B cell (primary cell): ENCODE measurements at regions of chr6 and their contacts with region 1.

Region 1: DNA sequence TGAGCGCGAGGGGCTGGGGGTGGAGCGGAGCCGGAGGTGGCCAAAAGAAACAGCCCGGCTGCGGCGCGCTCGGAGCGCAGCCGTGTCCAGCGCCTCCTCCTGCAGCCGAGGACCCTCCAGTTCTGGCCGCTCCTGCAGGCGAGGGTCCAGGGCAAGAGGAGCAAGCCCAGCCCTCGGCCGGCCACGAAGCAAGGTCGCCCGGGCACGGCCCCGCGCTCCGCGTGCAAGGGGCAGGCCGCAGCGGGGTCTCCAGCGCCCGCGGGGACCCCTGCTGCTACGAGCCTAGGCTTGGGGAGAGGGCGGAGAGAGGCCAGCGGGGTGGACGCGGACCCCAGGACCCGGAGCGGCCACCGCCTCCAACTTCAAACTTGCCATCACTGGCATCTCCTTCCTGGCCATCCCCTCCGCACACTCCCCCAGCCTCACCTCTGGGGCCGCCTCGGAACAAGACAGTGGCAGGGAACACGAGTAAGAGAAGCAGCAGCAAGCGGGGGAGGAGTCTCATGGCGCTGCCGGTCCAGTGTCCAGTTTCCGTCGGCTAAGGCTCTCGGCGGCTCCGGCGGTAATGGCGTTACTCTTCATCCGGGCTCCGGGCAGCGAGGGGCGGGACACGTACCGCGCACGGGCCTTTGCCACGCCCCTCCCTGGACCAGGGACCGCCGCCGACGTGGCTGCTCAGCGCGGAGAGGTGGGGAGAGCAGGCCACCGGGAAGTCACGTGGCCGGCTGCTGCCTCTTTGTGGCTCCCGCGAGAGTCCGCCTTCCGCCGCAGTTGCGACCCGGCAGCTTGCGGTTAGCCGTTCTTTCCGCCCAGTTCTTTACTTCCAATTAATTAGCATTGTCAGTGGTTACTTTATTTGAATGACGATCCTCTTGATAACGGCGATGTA is at the start of gene SSR1:
- DNase-seq: peak; percentile 96
- ATAC-seq: peak; percentile 99
- H3K4me3 ChIP-seq: peak within 1 kb of the TSS; percentile 58 to 92 (median 90)
- H3K4me3 Mint-ChIP-seq: peak within 1 kb of the TSS; percentile 96
- H3K27ac ChIP-seq: peak within 1 kb of the TSS; percentile 56 to 84
- H3K27ac Mint-ChIP-seq: peak within 1 kb of the TSS; percentile 94
- H3K4me1 ChIP-seq: peaks cover 12 to 20% of the 10 kb centered on the region in 2 donors
- H3K4me1 Mint-ChIP-seq: peaks cover 38% of the 10 kb centered on the region
- H3K27me3 ChIP-seq: no peaks in the 10 kb centered on the region
- H3K27me3 Mint-ChIP-seq: no peaks in the 10 kb centered on the region
- CTCF ChIP-seq: no peak
- total RNA-seq, gene SSR1: 81.6 and 85.3 TPM in 2 replicates

Region 2: GRCh38 chr6:7282097-7282906 is 30.6 kb before region 1 on chr6:
- CTCF ChIA-PET with region 1: interaction called, 7 read pairs
- POLR2A ChIA-PET with region 1: interaction called, 5 read pairs
- intact Hi-C with region 1: loop called (anchors 1 kb)
- DNase-seq: no peak
- ATAC-seq: no peak
- H3K4me3 ChIP-seq: no peak overlapping the region
- H3K4me3 Mint-ChIP-seq: no peak overlapping the region
- H3K27ac ChIP-seq: peak overlapping the region in 1 of 2 donors; percentile 38
- H3K27ac Mint-ChIP-seq: peak overlapping the region; percentile 43
- H3K4me1 ChIP-seq: peaks cover 24 to 27% of the 10 kb centered on the region in 2 donors
- H3K4me1 Mint-ChIP-seq: peaks cover 25% of the 10 kb centered on the region
- H3K27me3 ChIP-seq: no peaks in the 10 kb centered on the region
- H3K27me3 Mint-ChIP-seq: no peaks in the 10 kb centered on the region
- CTCF ChIP-seq: no peak

Region 3: DNA sequence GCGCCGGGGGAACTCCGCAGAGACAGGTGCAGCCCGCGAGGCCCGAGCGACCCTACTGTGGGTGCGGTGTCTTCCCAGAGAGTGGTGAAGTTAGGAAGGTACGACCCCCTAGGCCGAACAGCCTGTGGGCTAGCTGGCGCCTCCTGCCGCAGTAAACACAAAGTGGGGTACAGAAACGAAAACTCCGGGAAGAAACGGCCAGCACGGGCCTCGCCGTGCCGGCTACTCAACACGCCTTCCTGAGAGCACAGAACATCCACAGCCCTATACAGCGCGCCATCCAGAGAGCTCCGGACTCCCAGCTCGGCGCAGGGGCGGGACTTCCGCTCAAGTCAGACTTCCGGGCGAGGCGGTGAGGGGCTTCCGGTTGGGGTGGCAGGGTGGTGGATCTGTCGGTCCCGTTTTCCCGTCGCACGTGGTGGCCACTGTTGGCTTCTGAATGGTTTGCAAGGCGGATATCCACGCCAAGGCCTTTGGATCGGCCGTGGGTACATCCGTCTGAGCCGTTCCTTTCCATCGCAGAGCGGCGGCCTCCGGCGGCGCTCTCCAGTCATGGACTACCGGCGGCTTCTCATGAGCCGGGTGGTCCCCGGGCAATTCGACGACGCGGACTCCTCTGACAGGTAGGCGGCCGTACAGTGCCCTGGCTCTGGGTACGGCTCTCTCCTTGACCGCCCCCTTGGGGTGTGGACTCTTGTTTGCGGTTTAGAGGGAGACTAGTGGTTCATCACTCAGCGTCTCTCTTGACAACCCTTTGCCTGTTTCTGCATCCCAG is 76.8 kb after region 1 on chr6 and contains the starts of genes CAGE1 and RIOK1:
- CTCF ChIA-PET with region 1: interaction called, 3 read pairs
- POLR2A ChIA-PET with region 1: interaction called, 14 read pairs
- intact Hi-C with region 1: loop called (anchors 1 kb)
- DNase-seq: peak; percentile 98
- ATAC-seq: peak; percentile 89
- H3K4me3 ChIP-seq: peak within 1 kb of the TSS; percentile 83 to 96 (median 85)
- H3K4me3 Mint-ChIP-seq: peak within 1 kb of the TSS; percentile 96
- H3K27ac ChIP-seq: peak within 1 kb of the TSS; percentile 96 to 100
- H3K27ac Mint-ChIP-seq: peak within 1 kb of the TSS; percentile 99
- H3K4me1 ChIP-seq: peaks cover 18 to 26% of the 10 kb centered on the region in 2 donors
- H3K4me1 Mint-ChIP-seq: peaks cover 34% of the 10 kb centered on the region
- H3K27me3 ChIP-seq: no peaks in the 10 kb centered on the region
- H3K27me3 Mint-ChIP-seq: no peaks in the 10 kb centered on the region
- CTCF ChIP-seq: no peak
- total RNA-seq, gene CAGE1: 0.32 and 0.34 TPM in 2 replicates
- total RNA-seq, gene RIOK1: 25.9 and 32.1 TPM in 2 replicates

Region 4: DNA sequence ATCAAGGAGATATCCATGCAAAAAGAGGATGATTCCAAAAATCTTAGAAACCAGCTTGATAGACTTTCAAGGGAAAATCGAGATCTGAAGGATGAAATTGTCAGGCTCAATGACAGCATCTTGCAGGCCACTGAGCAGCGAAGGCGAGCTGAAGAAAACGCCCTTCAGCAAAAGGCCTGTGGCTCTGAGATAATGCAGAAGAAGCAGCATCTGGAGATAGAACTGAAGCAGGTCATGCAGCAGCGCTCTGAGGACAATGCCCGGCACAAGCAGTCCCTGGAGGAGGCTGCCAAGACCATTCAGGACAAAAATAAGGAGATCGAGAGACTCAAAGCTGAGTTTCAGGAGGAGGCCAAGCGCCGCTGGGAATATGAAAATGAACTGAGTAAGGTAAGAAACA is 267.0 kb after region 1 on chr6:
- CTCF ChIA-PET with region 1: no interaction called
- POLR2A ChIA-PET with region 1: no interaction called
- intact Hi-C with region 1: no loop called
- DNase-seq: no peak
- ATAC-seq: no peak
- H3K4me3 ChIP-seq: no peak overlapping the region
- H3K4me3 Mint-ChIP-seq: no peak overlapping the region
- H3K27ac ChIP-seq: no peak overlapping the region
- H3K27ac Mint-ChIP-seq: no peak overlapping the region
- H3K4me1 ChIP-seq: no peaks in the 10 kb centered on the region
- H3K4me1 Mint-ChIP-seq: no peaks in the 10 kb centered on the region
- H3K27me3 ChIP-seq: peaks cover 0 to 29% (median 3%) of the 10 kb centered on the region in 4 experiments
- H3K27me3 Mint-ChIP-seq: peaks cover 32% of the 10 kb centered on the region
- CTCF ChIP-seq: no peak

Region 5: DNA sequence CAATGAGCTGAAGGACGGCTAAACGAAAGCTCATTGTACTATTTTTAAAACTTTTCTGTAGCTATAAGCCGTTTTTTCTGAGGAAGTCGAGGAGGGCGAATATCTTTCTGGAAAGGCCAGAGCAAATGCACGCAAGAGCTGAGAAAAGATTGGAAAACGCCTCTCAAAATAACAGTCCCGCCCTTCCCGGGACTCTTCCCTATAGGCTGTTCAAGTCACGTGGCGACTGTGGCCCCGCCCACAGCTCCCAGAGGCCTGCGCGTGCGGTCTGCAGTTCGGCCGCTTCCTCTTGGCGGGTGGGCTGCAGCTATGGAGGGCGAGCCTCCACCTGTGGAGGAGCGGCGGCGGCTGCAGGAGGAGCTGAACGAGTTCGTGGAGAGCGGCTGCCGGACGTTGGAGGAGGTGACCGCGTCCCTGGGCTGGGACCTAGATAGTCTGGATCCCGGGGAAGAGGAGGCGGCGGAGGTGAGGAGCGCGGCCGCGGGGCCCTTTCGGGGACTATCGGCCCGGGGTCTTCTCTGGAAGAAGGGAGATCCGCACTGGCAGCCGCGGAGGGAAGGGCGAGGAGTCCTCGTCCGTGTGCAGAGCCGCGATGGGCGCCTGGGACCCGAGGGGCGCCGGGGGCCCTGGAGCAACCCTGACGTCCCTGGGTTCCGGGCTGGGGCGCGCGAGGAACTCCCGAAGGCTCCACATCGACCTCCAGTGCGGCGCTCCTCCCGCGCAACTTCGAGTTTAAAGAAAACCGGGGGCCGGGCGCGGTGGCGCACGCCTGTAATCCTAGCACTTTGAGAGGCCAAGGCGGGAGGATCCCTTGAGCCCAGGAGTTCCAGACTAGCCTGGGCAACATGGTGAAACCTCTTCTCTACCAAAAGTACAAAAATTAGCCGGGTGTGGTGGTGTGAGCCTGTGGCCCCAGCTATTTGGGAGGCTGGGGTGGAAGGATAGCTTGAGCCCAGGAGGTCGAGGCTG is 277.4 kb after region 1 on chr6 and contains the start of gene SNRNP48:
- CTCF ChIA-PET with region 1: no interaction called
- POLR2A ChIA-PET with region 1: no interaction called
- intact Hi-C with region 1: loop called (anchors 1 kb)
- DNase-seq: peak; percentile 93
- ATAC-seq: peak; percentile 100
- H3K4me3 ChIP-seq: peak within 1 kb of the TSS; percentile 67 to 97 (median 87)
- H3K4me3 Mint-ChIP-seq: peak within 1 kb of the TSS; percentile 100
- H3K27ac ChIP-seq: peak within 1 kb of the TSS; percentile 23 to 62
- H3K27ac Mint-ChIP-seq: peak within 1 kb of the TSS; percentile 96
- H3K4me1 ChIP-seq: peaks cover 21 to 27% of the 10 kb centered on the region in 2 donors
- H3K4me1 Mint-ChIP-seq: peaks cover 35% of the 10 kb centered on the region
- H3K27me3 ChIP-seq: no peaks in the 10 kb centered on the region
- H3K27me3 Mint-ChIP-seq: no peaks in the 10 kb centered on the region
- CTCF ChIP-seq: no peak
- total RNA-seq, gene SNRNP48: 22.9 and 25.3 TPM in 2 replicates

Region 6: DNA sequence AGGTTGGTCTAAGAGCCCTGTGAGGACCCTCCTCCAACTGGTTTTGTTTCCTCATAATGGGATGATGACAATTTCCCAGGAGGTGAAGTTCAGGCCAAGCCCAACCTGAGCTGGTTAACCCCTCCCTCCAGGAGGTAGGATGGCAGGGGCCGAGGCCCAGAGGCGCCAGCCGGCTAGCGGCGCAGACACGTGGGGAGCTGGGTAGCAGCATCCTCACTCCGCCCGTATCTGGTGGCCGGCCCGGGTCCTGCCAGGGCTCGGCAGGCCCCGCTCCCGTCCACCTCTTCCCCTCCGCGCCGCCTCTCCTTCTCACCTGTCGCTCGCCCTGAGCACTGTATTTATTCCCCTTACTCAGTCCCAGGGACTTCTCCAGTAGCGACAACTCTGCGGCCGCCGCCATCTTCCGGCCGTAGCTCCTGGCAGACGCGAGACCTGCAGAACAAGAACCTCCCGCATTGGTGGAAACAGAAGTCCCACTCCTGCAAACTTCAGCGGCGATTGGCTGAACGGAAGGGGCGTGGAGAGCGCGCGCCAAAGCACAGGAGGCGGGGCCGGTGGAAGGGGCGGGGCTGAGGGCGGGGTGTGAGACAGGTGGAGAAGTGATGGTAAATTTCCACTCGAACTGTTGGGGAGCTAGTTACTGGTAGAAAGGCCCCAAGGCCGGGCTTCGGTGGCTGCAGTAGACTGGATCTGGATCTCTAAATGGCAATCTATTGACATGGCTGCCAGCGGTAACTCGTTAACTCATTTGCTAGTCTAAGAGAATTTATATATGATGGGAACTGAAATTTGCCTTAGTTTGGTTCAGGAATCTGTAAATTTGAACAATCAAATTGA is 789.5 kb after region 1 on chr6 and contains the start of gene EEF1E1:
- CTCF ChIA-PET with region 1: no interaction called
- POLR2A ChIA-PET with region 1: no interaction called
- intact Hi-C with region 1: loop called (anchors 2 kb)
- DNase-seq: peak; percentile 95
- ATAC-seq: peak; percentile 98
- H3K4me3 ChIP-seq: peak within 1 kb of the TSS; percentile 61 to 89 (median 86)
- H3K4me3 Mint-ChIP-seq: peak within 1 kb of the TSS; percentile 96
- H3K27ac ChIP-seq: peak within 1 kb of the TSS; percentile 50 to 76
- H3K27ac Mint-ChIP-seq: peak within 1 kb of the TSS; percentile 97
- H3K4me1 ChIP-seq: peaks cover 12% of the 10 kb centered on the region in 2 donors
- H3K4me1 Mint-ChIP-seq: peaks cover 21% of the 10 kb centered on the region
- H3K27me3 ChIP-seq: peaks cover 0 to 6% (median 2%) of the 10 kb centered on the region in 4 experiments
- H3K27me3 Mint-ChIP-seq: peaks cover 22% of the 10 kb centered on the region
- CTCF ChIP-seq: no peak
- total RNA-seq, gene EEF1E1: 20.1 and 23.1 TPM in 2 replicates